AG04450 (cell line): ENCODE measurements at regions of chr11 and their contacts with region 1.

Region 1: GRCh38 chr11:62905927-62906531 is 15.1 kb downstream of the CHRM1 start:
- DNase-seq: peak; percentile 69
- H3K4me3 ChIP-seq: no peak overlapping the region
- H3K27ac ChIP-seq: no peak overlapping the region
- H3K27me3 ChIP-seq: peaks cover 14% of the 10 kb centered on the region
- CTCF ChIP-seq: peak; percentile 100

Region 2: DNA sequence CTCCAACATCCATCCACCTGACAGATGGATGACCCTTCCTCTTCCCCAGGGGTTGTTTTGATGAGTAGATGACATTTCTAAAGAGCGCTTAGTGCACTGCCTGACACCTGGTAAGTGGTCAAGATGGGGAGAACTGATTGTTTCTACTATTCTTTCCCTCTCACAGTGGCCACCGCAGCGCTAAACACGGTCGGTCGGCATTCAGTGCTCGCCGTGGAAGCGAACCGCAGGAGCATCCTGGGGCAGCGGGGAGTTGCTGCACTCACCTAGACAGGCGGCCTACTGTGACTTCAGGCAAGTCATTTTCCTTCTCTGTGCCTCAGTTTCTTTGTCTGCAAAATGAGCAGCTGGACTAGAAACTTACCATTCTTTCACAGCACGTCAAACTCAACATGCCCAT is 960.8 kb before region 1 on chr11:
- CTCF ChIA-PET with region 1: no interaction called
- POLR2A ChIA-PET with region 1: no interaction called
- DNase-seq: no peak
- H3K4me3 ChIP-seq: no peak overlapping the region
- H3K27ac ChIP-seq: no peak overlapping the region
- H3K27me3 ChIP-seq: peaks cover 13% of the 10 kb centered on the region
- CTCF ChIP-seq: no peak

Region 3: GRCh38 chr11:62889484-62890437 is 16.3 kb before region 1 on chr11:
- CTCF ChIA-PET with region 1: interaction called, 13 read pairs
- POLR2A ChIA-PET with region 1: no interaction called
- DNase-seq: no peak
- H3K4me3 ChIP-seq: no peak overlapping the region
- H3K27ac ChIP-seq: peak overlapping the region; percentile 39
- H3K27me3 ChIP-seq: no peaks in the 10 kb centered on the region
- CTCF ChIP-seq: no peak

Region 4: DNA sequence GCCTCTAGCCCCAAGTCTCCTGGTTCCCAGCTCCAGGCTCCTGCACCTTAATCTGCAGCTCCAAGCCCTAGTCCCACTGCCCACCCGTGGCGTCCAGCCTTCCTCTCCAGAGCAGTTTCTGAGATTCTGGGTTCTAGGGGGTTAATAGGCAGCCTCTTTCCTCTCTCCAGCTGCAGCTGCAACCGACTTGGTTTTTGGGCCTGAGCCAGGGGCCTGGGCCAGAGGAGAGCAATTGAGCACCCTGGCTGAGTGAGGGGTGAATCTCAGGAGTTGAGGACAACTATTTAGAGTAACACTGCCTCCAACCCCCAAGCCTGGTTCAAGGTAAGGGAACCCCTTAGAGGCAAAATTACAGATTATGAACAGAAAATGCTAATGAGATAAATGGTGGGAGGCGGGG is 24.1 kb after region 1 on chr11:
- CTCF ChIA-PET with region 1: interaction called, 17 read pairs
- POLR2A ChIA-PET with region 1: no interaction called
- DNase-seq: no peak
- H3K4me3 ChIP-seq: no peak overlapping the region
- H3K27ac ChIP-seq: no peak overlapping the region
- H3K27me3 ChIP-seq: peaks cover 40% of the 10 kb centered on the region
- CTCF ChIP-seq: no peak

Region 5: GRCh38 chr11:63023841-63024648 is 118.0 kb after region 1 on chr11:
- CTCF ChIA-PET with region 1: interaction called, 567 read pairs
- POLR2A ChIA-PET with region 1: no interaction called
- DNase-seq: peak; percentile 46
- H3K4me3 ChIP-seq: no peak overlapping the region
- H3K27ac ChIP-seq: no peak overlapping the region
- H3K27me3 ChIP-seq: peaks cover 5% of the 10 kb centered on the region
- CTCF ChIP-seq: peak; percentile 100